ENCODE measurements at regions of chr19 and their contacts with region 1.

Region 1: GRCh38 chr19:5686647-5687359 is 3.3 kb upstream of the RPL36 start:
- DNase-seq: peak; percentile 92
- H3K4me3 ChIP-seq: peak overlapping the region; percentile 64
- H3K27ac ChIP-seq: peak overlapping the region; percentile 58
- H3K4me1 ChIP-seq: peaks cover 3% of the 10 kb centered on the region
- H3K27me3 ChIP-seq: no peaks in the 10 kb centered on the region
- CTCF ChIP-seq: peak; percentile 96

Region 2: DNA sequence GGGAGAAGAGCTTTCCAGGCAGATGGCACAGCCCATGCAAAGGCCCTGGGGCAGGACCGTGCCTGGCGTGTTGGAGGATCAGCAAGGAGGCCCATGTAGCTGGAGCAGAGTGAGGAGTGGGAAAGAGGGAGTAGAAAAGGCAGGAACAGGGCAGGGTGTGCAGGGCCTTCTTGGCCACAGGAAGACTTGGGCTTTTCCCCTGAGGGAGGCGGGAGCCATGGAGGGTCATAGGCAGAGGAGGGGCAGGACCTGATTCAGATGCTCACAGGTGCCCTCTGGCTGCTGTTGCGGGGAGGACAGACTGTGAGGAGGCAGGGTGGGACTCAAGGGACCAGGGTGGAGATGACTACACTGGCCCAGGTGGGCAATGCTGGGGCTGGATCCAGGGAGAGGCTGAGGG is 332.4 kb before region 1 on chr19:
- CTCF ChIA-PET with region 1: no interaction called
- POLR2A ChIA-PET with region 1: no interaction called
- intact Hi-C with region 1: no loop called
- DNase-seq: peak; percentile 48
- H3K4me3 ChIP-seq: no peak overlapping the region
- H3K27ac ChIP-seq: no peak overlapping the region
- H3K4me1 ChIP-seq: no peaks in the 10 kb centered on the region
- H3K27me3 ChIP-seq: no peaks in the 10 kb centered on the region
- CTCF ChIP-seq: peak; percentile 46

Region 3: GRCh38 chr19:5627395-5627904 is 59.4 kb before region 1 on chr19:
- CTCF ChIA-PET with region 1: interaction called, 17 read pairs
- POLR2A ChIA-PET with region 1: interaction called, 7 read pairs
- intact Hi-C with region 1: no loop called
- DNase-seq: peak; percentile 44
- H3K4me3 ChIP-seq: no peak overlapping the region
- H3K27ac ChIP-seq: no peak overlapping the region
- H3K4me1 ChIP-seq: peaks cover 21% of the 10 kb centered on the region
- H3K27me3 ChIP-seq: no peaks in the 10 kb centered on the region
- CTCF ChIP-seq: no peak

Region 4: DNA sequence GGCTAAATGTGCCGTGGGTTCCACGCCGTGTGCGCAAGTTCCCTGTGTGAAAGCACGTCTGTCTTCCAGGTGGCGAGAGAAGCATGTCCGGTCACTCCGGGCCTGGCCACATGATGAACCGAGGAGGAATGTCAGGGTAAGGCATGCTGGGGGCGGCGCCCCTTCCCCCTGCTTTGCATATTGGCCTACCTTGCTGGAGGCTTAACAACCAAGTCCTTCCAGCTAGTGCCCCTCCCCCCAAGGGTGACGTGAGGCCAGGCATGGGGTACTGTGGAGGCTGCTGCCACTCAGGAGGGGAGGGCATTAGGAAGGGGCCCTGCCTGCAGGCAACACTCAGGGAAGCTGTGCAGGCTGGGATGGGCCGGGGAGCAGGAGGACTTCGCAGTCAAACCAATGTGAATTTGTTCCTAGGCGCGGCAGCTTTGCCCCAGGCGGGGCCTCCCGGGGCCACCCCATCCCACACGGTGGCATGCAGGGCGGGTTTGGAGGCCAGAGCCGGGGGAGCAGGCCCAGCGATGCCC is 19.0 kb before region 1 on chr19:
- CTCF ChIA-PET with region 1: interaction called, 10 read pairs
- POLR2A ChIA-PET with region 1: interaction called, 4 read pairs
- intact Hi-C with region 1: no loop called
- DNase-seq: no peak
- H3K4me3 ChIP-seq: no peak overlapping the region
- H3K27ac ChIP-seq: no peak overlapping the region
- H3K4me1 ChIP-seq: no peaks in the 10 kb centered on the region
- H3K27me3 ChIP-seq: no peaks in the 10 kb centered on the region
- CTCF ChIP-seq: no peak

Region 5: DNA sequence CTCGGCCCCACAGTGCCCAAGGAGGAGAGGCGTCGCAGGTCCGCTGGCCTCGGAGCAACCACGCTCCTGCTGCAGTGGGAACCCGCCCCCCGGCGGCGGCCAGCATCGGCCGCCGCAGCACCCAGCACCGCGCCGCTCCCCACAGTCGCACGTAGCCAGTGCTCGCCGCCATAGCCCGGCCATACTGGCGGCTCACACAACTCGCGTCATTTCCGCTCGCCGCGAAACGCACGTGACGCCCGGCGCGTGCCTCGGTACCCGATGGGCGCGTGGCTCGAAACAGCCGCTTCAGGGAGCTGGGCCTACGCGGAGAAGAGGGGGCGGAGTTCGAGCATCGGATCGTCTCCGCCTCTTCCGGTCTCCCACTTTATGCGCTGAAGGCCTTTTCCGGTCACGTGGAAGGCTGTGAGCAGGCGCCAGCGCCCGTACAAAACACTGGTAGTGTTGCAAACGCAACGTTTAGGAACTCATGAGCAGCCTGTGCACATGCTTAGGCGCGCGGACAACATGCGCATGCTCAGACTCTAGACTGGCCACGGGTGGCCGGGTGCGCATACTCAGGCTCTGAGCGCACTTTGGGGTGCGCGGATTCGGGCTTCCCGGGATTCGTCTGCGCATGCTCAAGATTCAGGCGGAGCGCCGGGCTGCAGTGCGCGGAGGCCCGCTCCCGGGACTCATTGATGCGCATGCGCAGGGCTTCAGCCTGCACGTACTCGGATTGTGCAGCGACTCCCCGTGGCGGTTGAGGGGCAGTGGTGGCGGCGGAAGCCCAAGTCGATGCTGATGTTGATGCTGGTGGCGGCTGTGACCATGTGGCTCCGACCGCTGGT is 33.4 kb after region 1 on chr19 and contains the starts of genes CATSPERD and LONP1:
- CTCF ChIA-PET with region 1: interaction called, 4 read pairs
- POLR2A ChIA-PET with region 1: interaction called, 20 read pairs
- intact Hi-C with region 1: no loop called
- DNase-seq: peak; percentile 99
- H3K4me3 ChIP-seq: peak within 1 kb of the TSS; percentile 93
- H3K27ac ChIP-seq: peak within 1 kb of the TSS; percentile 98
- H3K4me1 ChIP-seq: peaks cover 16% of the 10 kb centered on the region
- H3K27me3 ChIP-seq: no peaks in the 10 kb centered on the region
- CTCF ChIP-seq: peak; percentile 97
- total RNA-seq, gene CATSPERD: not detected in 2 replicates
- total RNA-seq, gene LONP1: 152 and 160 TPM in 2 replicates

Region 6: DNA sequence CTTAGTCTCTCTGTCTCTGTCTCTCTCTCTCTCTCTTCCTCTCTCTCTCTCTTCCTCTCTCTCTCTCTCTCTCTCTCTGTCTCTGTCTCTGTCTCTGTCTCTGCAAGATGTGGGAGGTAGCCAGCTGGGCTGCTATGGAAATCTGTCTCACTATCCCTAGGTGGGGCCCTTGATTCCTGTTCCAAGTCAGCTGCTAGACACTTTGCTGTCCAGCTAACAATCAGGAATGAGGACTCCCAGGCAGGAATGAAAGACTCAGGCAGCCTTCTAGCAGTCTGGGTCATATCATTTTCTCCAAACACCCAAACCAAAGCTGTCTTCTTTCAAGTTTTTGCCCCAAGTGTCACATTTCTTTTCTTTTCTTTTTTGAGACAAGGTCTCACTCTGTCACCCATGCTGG is 56.8 kb after region 1 on chr19:
- CTCF ChIA-PET with region 1: no interaction called
- POLR2A ChIA-PET with region 1: interaction called, 21 read pairs
- intact Hi-C with region 1: no loop called
- DNase-seq: no peak
- H3K4me3 ChIP-seq: no peak overlapping the region
- H3K27ac ChIP-seq: no peak overlapping the region
- H3K4me1 ChIP-seq: no peaks in the 10 kb centered on the region
- H3K27me3 ChIP-seq: no peaks in the 10 kb centered on the region
- CTCF ChIP-seq: no peak